Activated T-helper 2 cell treated with anti-CD3 and anti-CD28 coated beads, Interferon-gamma antibody, Interleukin-2, Interleukin-4, amounts not matched to agents 10 μg/mL and 5 μg/mL and 100 μg/mL, durations not matched to agents 14 hours and 24 hours and 36 hours (primary cell): ENCODE measurements at regions of chr6 and their contacts with region 1.

Region 1: GRCh38 chr6:130020907-130021629 is 2.7 kb downstream of the L3MBTL3 start:
- DNase-seq: peak; percentile 72
- H3K4me3 Mint-ChIP-seq: peak overlapping the region; percentile 93
- H3K27ac Mint-ChIP-seq: peak overlapping the region; percentile 91
- H3K4me1 Mint-ChIP-seq: peaks cover 12% of the 10 kb centered on the region
- H3K27me3 Mint-ChIP-seq: peaks cover 14% of the 10 kb centered on the region

Region 2: DNA sequence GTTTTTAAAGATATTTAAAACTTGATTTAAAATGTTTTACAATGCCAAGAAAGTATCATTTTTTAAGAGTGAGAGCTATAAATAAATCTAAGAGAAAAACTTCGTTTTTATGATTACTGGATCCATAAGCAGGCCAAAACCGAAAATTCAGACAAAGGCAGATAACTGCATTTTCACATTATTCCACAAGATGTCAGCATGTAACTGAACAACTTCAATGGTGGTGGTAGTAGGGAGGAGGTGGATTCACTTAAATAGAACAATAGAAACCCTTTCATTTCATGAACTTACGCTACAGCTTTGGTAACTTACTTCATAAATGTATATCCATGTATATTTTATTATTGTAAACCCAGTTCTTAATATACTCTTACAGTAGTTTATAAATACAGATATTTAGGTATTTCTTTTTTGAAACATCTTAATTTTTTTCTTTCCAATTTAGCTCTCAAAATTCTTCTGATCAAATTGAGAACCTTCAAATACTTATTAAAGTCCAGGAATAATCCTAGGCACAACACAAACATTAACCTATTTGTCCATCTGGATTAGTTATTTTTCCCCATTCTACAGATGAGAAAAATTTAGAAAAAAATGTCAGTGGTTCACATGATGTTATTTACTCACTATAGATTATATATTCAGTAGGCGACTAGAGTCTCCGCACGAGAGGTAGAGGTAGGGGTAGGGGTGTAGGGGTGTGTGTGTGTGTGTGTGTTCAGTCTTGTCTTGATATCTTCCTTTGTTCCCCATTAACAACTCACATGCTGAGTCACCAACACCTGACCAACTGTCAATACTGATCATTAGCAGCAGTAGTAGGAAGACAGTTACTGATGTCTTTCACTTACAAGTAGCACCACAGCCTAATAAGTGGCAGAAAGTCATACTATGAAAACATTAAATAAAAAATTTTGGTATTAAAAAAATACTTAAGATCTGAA is 422.6 kb before region 1 on chr6:
- intact Hi-C with region 1: loop called (anchors 2 kb)
- DNase-seq: no peak
- H3K4me3 Mint-ChIP-seq: no peak overlapping the region
- H3K27ac Mint-ChIP-seq: no peak overlapping the region
- H3K4me1 Mint-ChIP-seq: peaks cover 3% of the 10 kb centered on the region
- H3K27me3 Mint-ChIP-seq: no peaks in the 10 kb centered on the region

Region 3: DNA sequence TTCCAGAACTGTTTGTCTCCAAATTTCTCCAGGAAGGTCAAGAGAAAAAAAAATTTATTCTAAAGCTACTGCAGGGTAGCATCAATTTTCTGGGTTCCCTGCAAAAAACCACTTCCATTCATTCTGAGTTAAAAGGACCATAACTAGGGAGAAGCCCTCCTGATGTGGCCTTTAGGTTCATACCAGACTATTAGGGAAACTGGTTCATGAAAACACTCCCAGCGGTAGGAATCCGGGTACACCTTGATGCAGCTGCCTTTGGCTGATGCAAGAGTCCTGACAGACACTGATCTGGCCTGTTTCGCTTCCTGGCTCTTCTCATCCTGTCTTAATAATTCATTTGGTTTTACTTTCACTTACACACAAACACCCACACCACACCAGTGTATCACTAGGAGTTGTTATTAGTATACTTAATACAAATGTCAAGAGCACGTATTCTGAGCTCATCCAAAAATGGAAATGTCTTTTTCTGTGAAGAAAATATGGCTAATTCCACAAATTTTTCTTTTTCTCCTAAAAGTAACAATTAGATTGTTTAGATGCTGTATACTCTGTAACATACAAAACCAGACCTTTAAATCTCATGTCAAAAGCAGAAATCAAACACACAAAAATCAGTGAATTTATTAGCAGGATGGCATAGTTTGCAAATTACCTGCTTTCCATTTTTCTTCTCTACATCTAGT is 272.7 kb before region 1 on chr6:
- intact Hi-C with region 1: loop called (anchors 5 kb)
- DNase-seq: peak; percentile 39
- H3K4me3 Mint-ChIP-seq: peak overlapping the region; percentile 55
- H3K27ac Mint-ChIP-seq: peak overlapping the region; percentile 54
- H3K4me1 Mint-ChIP-seq: peaks cover 44% of the 10 kb centered on the region
- H3K27me3 Mint-ChIP-seq: no peaks in the 10 kb centered on the region

Region 4: GRCh38 chr6:129893640-129894039 is 127.4 kb before region 1 on chr6:
- intact Hi-C with region 1: loop called (anchors 2 kb)
- DNase-seq: no peak
- H3K4me3 Mint-ChIP-seq: no peak overlapping the region
- H3K27ac Mint-ChIP-seq: no peak overlapping the region
- H3K4me1 Mint-ChIP-seq: peaks cover 3% of the 10 kb centered on the region
- H3K27me3 Mint-ChIP-seq: peaks cover 7% of the 10 kb centered on the region

Region 5: GRCh38 chr6:130513770-130514169 is 492.7 kb after region 1 on chr6:
- intact Hi-C with region 1: loop called (anchors 10 kb)
- DNase-seq: peak; percentile 76
- H3K4me3 Mint-ChIP-seq: no peak overlapping the region
- H3K27ac Mint-ChIP-seq: peak overlapping the region; percentile 88
- H3K4me1 Mint-ChIP-seq: peaks cover 57% of the 10 kb centered on the region
- H3K27me3 Mint-ChIP-seq: no peaks in the 10 kb centered on the region